ENCODE measurements at regions of chr17 and their contacts with region 1.

Region 1: GRCh38 chr17:43324205-43324893 is 74.4 kb upstream of the ARL4D start:
- DNase-seq: no peak
- H3K4me3 ChIP-seq: no peak overlapping the region
- H3K27ac ChIP-seq: no peak overlapping the region
- H3K4me1 ChIP-seq: peaks cover 0 to 4% (median 0%) of the 10 kb centered on the region in 4 donors
- H3K27me3 ChIP-seq: peaks cover 8% of the 10 kb centered on the region
- CTCF ChIP-seq: no peak
- EP300 ChIP-seq: no peak
- POLR2A ChIP-seq: no peak

Region 2: DNA sequence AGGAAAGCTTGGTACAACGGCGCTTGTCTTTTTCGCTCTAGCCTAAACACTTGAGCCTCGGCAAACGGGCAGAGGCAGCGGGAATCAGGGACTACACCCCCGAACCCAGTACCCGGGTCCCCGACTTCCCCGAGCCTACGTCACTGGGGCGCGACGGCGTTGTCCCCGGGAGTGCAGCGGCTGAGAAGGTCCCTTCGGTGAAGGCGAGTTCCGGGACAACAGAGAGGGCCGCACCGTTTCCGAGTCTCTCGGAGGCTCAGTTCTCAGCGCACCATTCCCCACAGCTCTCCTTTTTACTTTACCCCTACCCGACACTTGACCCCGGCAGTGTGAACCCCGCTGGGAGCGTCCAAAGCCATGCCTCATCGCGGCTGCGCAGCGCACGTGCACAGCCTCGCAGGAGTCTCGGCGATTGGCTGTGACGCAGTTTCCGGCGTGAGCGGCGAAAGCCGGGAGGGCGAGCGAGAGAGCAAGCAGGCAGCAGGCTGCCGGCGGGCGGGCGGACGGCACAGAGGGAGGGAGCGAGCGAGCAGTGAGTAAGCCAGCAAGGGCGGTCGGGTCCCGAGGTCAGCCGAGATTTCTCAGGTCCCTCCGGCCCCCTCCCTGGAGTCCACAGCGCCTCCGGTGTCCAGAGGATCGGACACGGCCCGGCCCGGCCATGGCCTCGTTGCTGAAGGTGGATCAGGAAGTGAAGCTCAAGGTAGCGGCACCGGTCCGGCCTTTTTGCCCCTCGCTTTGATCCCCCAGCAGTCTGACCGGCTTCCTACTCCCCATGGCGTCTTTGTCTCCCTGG is 491.2 kb before region 1 on chr17 and contains the start of gene PSME3:
- in situ Hi-C with region 1: loop called in 1 of 4 experiments (anchors 25 kb)
- intact Hi-C with region 1: no loop called
- DNase-seq: peak; percentile 93
- H3K4me3 ChIP-seq: peak within 1 kb of the TSS; percentile 86 to 94 (median 88)
- H3K27ac ChIP-seq: peak within 1 kb of the TSS; percentile 83 to 91 (median 90)
- H3K4me1 ChIP-seq: peaks cover 0 to 18% (median 15%) of the 10 kb centered on the region in 4 donors
- H3K27me3 ChIP-seq: no peaks in the 10 kb centered on the region
- CTCF ChIP-seq: no peak
- EP300 ChIP-seq: no peak
- POLR2A ChIP-seq: peak; percentile 96
- total RNA-seq, gene PSME3: 37.0 to 131 (median 60.4) TPM

Region 3: GRCh38 chr17:43211480-43212402 is 112.6 kb before region 1 on chr17 and contains the start of gene TMEM106A:
- in situ Hi-C with region 1: loop called in 1 of 4 experiments (anchors 25 kb)
- intact Hi-C with region 1: no loop called
- DNase-seq: peak; percentile 82
- H3K4me3 ChIP-seq: peak within 1 kb of the TSS; percentile 38 to 54 (median 46)
- H3K27ac ChIP-seq: peak within 1 kb of the TSS; percentile 79 to 87 (median 86)
- H3K4me1 ChIP-seq: peaks cover 9 to 28% (median 23%) of the 10 kb centered on the region in 4 donors
- H3K27me3 ChIP-seq: no peaks in the 10 kb centered on the region
- CTCF ChIP-seq: peak; percentile 3 to 54 (median 34)
- EP300 ChIP-seq: no peak
- POLR2A ChIP-seq: peak; percentile 60
- total RNA-seq, gene TMEM106A: 4.1 to 24.3 (median 7.9) TPM

Region 4: GRCh38 chr17:43367737-43368242 is 43.4 kb after region 1 on chr17:
- in situ Hi-C with region 1: no loop called
- intact Hi-C with region 1: loop called (anchors 2 kb)
- DNase-seq: no peak
- H3K4me3 ChIP-seq: peak overlapping the region in 3 of 4 donors; percentile 49 to 72 (median 71)
- H3K27ac ChIP-seq: peak overlapping the region; percentile 98 to 100 (median 100)
- H3K4me1 ChIP-seq: peaks cover 13 to 29% (median 23%) of the 10 kb centered on the region in 4 donors
- H3K27me3 ChIP-seq: no peaks in the 10 kb centered on the region
- CTCF ChIP-seq: no peak
- EP300 ChIP-seq: no peak
- POLR2A ChIP-seq: no peak